Activated CD4-positive, alpha-beta memory T cell treated with anti-CD3 and anti-CD28 coated beads for 36 hours (primary cell): ENCODE measurements at regions of chr19 and their contacts with region 1.

Region 1: GRCh38 chr19:46513461-46514236 is 18.0 kb upstream of the PNMA8B start:
- DNase-seq: peak; percentile 83
- H3K4me3 Mint-ChIP-seq: no peak overlapping the region
- H3K27ac Mint-ChIP-seq: no peak overlapping the region
- H3K4me1 Mint-ChIP-seq: peaks cover 7% of the 10 kb centered on the region
- H3K27me3 Mint-ChIP-seq: peaks cover 19% of the 10 kb centered on the region

Region 2: DNA sequence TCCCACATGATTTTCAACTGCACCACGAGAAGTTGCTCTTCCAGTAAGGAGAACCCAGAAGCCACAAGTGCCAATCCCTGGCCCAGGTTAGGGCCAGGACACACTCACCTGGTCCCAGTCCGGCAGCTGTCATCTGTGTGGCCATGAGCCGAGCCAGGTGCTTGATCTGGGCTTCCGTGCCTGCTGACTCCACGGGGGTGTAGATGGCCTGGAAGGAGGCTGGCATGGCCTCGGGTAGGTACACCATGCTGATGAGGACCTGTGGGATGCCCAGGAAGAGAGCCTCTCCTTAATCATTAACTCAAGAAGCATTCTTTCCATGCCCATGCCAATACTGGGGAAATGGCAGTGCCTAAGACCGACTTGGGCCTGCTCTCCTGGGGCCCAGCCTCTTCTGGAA is 678.7 kb before region 1 on chr19:
- CTCF ChIA-PET with region 1: no interaction called
- POLR2A ChIA-PET with region 1: no interaction called
- intact Hi-C with region 1: no loop called
- DNase-seq: no peak
- H3K4me3 Mint-ChIP-seq: no peak overlapping the region
- H3K27ac Mint-ChIP-seq: no peak overlapping the region
- H3K4me1 Mint-ChIP-seq: no peaks in the 10 kb centered on the region
- H3K27me3 Mint-ChIP-seq: no peaks in the 10 kb centered on the region

Region 3: DNA sequence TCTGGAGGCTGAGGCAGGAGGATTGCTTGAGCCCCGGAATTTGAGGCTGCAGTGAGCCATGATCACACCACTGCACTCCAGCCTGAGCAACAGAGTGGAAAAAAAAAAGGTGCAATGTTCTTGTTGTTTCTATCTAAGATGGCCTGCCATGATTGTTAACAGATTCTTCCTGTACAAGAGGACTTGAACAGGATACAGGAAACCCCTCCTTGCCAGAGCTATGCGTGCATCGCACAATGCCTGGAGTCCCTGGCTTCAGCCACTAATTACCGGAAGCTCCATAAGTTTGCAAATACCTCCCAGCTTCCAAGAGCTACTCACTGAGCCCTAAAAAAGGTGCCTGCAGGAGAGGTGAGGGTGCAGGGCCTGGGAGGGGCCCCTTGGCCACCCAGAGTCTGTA is 229.9 kb before region 1 on chr19:
- CTCF ChIA-PET with region 1: interaction called, 20 read pairs
- POLR2A ChIA-PET with region 1: no interaction called
- intact Hi-C with region 1: loop called (anchors 10 kb)
- DNase-seq: no peak
- H3K4me3 Mint-ChIP-seq: no peak overlapping the region
- H3K27ac Mint-ChIP-seq: no peak overlapping the region
- H3K4me1 Mint-ChIP-seq: no peaks in the 10 kb centered on the region
- H3K27me3 Mint-ChIP-seq: peaks cover 10% of the 10 kb centered on the region

Region 4: DNA sequence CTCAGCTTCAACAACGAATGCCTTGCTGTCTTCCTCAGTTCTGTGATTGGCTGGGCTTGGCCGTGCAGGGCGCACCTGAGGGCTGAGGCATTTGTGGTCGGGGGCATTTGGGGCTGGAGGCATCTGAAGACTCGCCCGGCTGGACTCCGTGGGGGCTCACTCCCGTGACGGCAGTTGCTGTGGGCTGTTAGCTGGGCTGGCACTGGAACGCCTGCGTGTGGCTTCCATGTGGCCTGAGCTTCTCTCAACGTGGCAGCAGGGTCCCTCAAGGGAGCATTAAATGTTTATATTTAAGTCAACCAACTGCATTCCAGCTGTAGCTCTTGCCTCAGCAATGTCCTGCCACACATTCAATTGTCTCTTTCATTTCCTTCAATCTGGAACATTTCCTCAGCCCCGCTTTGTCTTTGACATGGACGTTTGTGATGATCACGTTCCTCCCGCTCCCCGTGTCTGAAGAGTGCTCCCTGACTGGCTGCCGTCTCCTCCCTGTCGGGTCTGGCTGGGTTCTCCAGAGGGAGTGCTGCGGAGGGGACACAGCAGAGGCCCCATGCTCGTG is 121.3 kb before region 1 on chr19:
- CTCF ChIA-PET with region 1: interaction called, 17 read pairs
- POLR2A ChIA-PET with region 1: no interaction called
- intact Hi-C with region 1: loop called (anchors 1 kb)
- DNase-seq: no peak
- H3K4me3 Mint-ChIP-seq: no peak overlapping the region
- H3K27ac Mint-ChIP-seq: no peak overlapping the region
- H3K4me1 Mint-ChIP-seq: peaks cover 2% of the 10 kb centered on the region
- H3K27me3 Mint-ChIP-seq: no peaks in the 10 kb centered on the region

Region 5: DNA sequence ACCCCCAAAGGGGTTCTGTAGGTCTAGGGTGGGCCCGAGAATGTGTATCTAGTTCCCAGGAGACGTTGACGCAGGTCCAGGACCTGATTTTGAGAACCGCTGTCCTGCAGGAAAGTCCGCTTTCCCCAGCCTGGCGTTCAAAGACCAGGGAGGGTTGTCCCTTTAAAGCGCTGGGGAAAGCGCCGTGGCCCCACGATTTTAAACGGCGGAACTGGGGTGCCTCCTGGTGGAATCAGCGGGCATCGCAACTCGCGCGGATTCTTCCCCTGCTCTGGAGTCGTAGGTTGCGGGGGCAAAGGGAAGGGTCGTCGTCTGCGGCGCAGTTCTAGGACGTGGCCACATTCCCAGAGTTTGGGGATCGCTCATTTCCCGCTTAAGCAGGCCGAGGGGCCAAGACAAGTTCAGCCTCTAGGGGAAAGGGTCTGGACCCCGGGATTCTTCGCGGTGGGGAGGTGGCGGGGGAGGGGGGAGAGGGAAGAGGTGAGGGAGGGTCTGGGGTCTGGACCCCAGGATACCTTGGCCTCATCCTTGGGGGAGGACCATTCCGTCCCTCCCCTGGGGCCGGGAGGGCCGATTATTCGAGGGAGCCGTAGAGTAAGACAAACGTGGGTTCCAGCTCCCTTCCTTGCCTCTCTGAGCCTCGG is 25.7 kb before region 1 on chr19:
- CTCF ChIA-PET with region 1: interaction called, 35 read pairs
- POLR2A ChIA-PET with region 1: no interaction called
- intact Hi-C with region 1: loop called (anchors 1 kb)
- DNase-seq: peak; percentile 83
- H3K4me3 Mint-ChIP-seq: no peak overlapping the region
- H3K27ac Mint-ChIP-seq: no peak overlapping the region
- H3K4me1 Mint-ChIP-seq: peaks cover 8% of the 10 kb centered on the region
- H3K27me3 Mint-ChIP-seq: peaks cover 62% of the 10 kb centered on the region

Region 6: GRCh38 chr19:46537136-46538097 is 23.8 kb after region 1 on chr19:
- CTCF ChIA-PET with region 1: interaction called, 12 read pairs
- POLR2A ChIA-PET with region 1: no interaction called
- intact Hi-C with region 1: loop called (anchors 1 kb)
- DNase-seq: peak; percentile 74
- H3K4me3 Mint-ChIP-seq: no peak overlapping the region
- H3K27ac Mint-ChIP-seq: no peak overlapping the region
- H3K4me1 Mint-ChIP-seq: peaks cover 4% of the 10 kb centered on the region
- H3K27me3 Mint-ChIP-seq: no peaks in the 10 kb centered on the region

Region 7: DNA sequence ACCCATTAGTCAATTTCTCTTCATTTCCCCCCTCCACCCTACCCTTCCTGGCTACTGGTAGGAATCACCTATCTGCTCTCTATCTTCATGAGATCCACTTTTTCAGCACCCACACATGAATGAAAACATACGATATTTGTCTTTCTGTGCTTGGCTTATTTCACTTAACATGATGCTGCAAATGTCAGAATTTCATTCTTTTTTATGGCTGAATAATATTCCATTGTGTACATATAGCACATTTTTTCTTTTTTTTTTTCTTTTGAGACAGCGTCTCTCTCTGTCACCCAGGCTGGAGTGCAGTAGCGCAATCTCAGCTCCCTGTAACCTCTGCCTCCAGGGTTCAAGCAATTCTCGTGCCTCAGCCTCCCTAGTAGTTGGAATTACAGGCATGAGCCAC is 77.6 kb after region 1 on chr19:
- CTCF ChIA-PET with region 1: no interaction called
- POLR2A ChIA-PET with region 1: no interaction called
- intact Hi-C with region 1: no loop called
- DNase-seq: no peak
- H3K4me3 Mint-ChIP-seq: no peak overlapping the region
- H3K27ac Mint-ChIP-seq: no peak overlapping the region
- H3K4me1 Mint-ChIP-seq: no peaks in the 10 kb centered on the region
- H3K27me3 Mint-ChIP-seq: no peaks in the 10 kb centered on the region